ENCODE measurements at regions of chr6 and their contacts with region 1.

Region 1: GRCh38 chr6:43774776-43775534 is 4.9 kb downstream of the VEGFA start:
- DNase-seq: peak; percentile 65 to 71
- H3K4me3 ChIP-seq: peak overlapping the region; percentile 90
- H3K27ac ChIP-seq: peak overlapping the region; percentile 94; the same call in 1 of the 2 replicates
- H3K4me1 ChIP-seq: peaks cover 35% of the 10 kb centered on the region
- H3K27me3 ChIP-seq: no peaks in the 10 kb centered on the region
- CTCF ChIP-seq: peak; percentile 85

Region 2: GRCh38 chr6:43788305-43788704 is 13.3 kb after region 1 on chr6:
- CTCF ChIA-PET with region 1: interaction called, 4 read pairs
- POLR2A ChIA-PET with region 1: interaction called, 25 read pairs
- intact Hi-C with region 1: no loop called
- DNase-seq: no peak
- H3K4me3 ChIP-seq: no peak overlapping the region
- H3K27ac ChIP-seq: no peak overlapping the region
- H3K4me1 ChIP-seq: peaks cover 15% of the 10 kb centered on the region
- H3K27me3 ChIP-seq: no peaks in the 10 kb centered on the region
- CTCF ChIP-seq: no peak

Region 3: GRCh38 chr6:43823879-43824702 is 49.1 kb after region 1 on chr6:
- CTCF ChIA-PET with region 1: no interaction called
- POLR2A ChIA-PET with region 1: no interaction called
- intact Hi-C with region 1: no loop called
- DNase-seq: no peak
- H3K4me3 ChIP-seq: no peak overlapping the region
- H3K27ac ChIP-seq: no peak overlapping the region
- H3K4me1 ChIP-seq: peaks cover 20% of the 10 kb centered on the region
- H3K27me3 ChIP-seq: no peaks in the 10 kb centered on the region
- CTCF ChIP-seq: no peak

Region 4: GRCh38 chr6:43838276-43839036 is 63.5 kb after region 1 on chr6:
- CTCF ChIA-PET with region 1: interaction called, 3 read pairs
- POLR2A ChIA-PET with region 1: no interaction called
- intact Hi-C with region 1: loop called (anchors 1 kb)
- DNase-seq: peak; percentile 39 to 57
- H3K4me3 ChIP-seq: no peak overlapping the region; the same call in 1 of the 2 replicates
- H3K27ac ChIP-seq: peak overlapping the region; percentile 73
- H3K4me1 ChIP-seq: peaks cover 36% of the 10 kb centered on the region
- H3K27me3 ChIP-seq: no peaks in the 10 kb centered on the region
- CTCF ChIP-seq: peak; percentile 85

Region 5: DNA sequence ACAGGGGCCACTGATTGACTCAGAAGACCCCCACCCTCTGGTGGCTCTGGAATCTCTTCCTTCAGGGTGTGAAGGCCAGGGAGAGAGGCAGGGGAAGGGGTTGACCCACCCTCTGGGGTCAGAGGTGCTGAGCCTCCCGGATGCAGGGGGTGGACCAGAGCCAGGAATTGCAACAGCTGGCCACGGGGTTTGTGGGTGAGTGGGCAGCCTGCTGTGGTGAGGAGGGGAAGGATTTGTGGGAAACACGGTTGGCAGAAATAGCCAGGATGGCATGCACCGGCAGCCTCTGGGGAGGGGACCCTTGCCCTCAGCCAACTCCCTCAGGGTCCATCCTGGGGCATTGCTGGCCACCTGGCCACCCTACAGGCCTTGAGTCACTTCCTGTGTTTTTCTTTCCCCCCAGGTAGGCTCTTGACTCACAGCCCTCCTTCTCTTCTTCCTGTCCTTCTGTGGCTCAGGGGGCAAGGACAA is 259.5 kb after region 1 on chr6:
- CTCF ChIA-PET with region 1: interaction called, 3 read pairs
- POLR2A ChIA-PET with region 1: no interaction called
- intact Hi-C with region 1: loop called (anchors 1 kb)
- DNase-seq: peak; percentile 87 to 94
- H3K4me3 ChIP-seq: peak overlapping the region; percentile 48; the same call in 1 of the 2 replicates
- H3K27ac ChIP-seq: peak overlapping the region; percentile 98
- H3K4me1 ChIP-seq: peaks cover 87% of the 10 kb centered on the region
- H3K27me3 ChIP-seq: no peaks in the 10 kb centered on the region
- CTCF ChIP-seq: no peak

Region 6: GRCh38 chr6:44237021-44237812 is 462.3 kb after region 1 on chr6:
- CTCF ChIA-PET with region 1: no interaction called
- POLR2A ChIA-PET with region 1: no interaction called
- intact Hi-C with region 1: no loop called
- DNase-seq: peak; percentile 93 to 98
- H3K4me3 ChIP-seq: peak overlapping the region; percentile 63
- H3K27ac ChIP-seq: peak overlapping the region; percentile 34; the same call in 1 of the 2 replicates
- H3K4me1 ChIP-seq: peaks cover 17% of the 10 kb centered on the region
- H3K27me3 ChIP-seq: no peaks in the 10 kb centered on the region
- CTCF ChIP-seq: no peak